Activated CD8-positive, alpha-beta memory T cell treated with anti-CD3 and anti-CD28 coated beads, Interleukin-2, amount 10 ng/mL, durations not matched to agents 7 days and 5 days (primary cell): ENCODE measurements at regions of chr1 and their contacts with region 1.

Region 1: DNA sequence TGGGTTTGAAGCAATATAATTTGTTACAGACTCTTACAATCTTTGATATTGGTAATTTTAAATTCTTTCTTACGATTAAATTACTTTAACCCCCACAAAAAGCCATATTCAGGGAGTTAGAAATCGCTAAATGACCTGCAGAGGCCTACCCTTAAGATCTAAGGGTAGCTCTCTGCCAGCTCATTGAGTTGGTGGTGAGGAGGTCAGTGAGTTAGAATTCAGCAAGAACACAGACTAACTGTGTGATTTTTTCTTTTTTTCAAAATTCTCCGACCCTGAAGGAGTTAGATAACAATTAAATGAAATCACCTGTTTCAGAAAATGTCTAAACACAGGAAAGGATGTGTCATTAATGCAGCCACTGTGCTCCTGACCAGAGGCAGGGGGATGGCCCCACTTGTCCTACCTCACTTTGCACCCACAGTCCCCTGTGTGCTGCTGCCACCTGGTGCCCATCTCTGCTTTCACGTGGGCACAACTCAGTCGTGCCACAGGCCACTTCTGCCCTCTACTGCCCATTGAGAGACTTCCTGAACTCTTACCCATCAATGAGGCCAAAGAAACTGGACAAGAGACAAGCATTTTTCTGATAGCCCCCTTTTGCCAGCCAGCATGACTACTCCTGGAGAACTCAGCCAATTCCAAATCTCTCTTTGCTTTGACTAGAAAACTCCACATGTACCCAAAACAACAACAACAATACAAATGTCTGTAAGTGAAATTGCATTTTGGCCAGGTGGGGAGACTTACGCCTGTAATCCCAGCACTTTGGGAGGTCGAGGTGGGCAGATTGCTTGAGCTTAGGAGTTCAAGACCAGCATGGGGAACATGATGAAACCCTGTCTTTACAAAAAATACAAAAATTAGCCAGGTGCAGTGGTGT is 8.4 kb downstream of the CFAP45 start:
- DNase-seq: peak; percentile 86
- ATAC-seq: peak; percentile 96
- H3K4me3 Mint-ChIP-seq: no peak overlapping the region
- H3K27ac Mint-ChIP-seq: no peak overlapping the region
- H3K4me1 Mint-ChIP-seq: peaks cover 18% of the 10 kb centered on the region
- H3K27me3 Mint-ChIP-seq: peaks cover 4% of the 10 kb centered on the region

Region 2: GRCh38 chr1:159687511-159687910 is 204.0 kb before region 1 on chr1:
- CTCF ChIA-PET with region 1: no interaction called
- DNase-seq: no peak
- ATAC-seq: no peak
- H3K4me3 Mint-ChIP-seq: no peak overlapping the region
- H3K27ac Mint-ChIP-seq: no peak overlapping the region
- H3K4me1 Mint-ChIP-seq: no peaks in the 10 kb centered on the region
- H3K27me3 Mint-ChIP-seq: peaks cover 40% of the 10 kb centered on the region

Region 3: DNA sequence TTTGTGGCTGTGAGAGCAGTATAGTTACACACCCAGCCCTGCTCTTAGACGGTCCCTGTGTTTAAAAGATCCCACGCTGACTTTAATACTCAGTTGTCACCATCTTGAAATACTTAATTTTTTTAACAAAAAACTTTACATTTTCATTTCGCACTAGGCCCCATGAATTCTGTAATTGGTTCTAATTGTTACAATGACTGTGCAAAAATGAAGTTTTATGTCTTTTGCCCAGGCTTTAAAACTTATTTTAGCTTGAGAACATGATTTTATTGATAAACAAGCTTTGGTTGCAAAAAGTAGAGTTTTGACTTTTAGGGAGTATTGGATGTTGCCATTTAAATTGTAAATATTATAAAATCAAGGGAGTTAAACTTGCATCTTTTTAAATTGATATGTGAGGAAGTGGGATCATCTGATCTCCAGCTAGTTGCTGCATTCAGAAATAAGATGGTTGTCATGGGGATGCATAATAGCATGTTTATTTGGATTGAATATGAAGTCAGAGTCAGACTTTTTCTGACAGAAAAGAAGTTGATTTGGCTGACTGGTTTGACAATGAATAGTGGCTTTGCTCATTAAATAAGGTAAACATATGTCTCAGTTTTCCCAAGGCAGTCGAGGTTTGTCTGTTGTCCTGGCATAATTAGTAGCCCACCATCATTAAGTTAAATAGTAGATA is 154.1 kb before region 1 on chr1:
- CTCF ChIA-PET with region 1: no interaction called
- DNase-seq: no peak
- ATAC-seq: no peak
- H3K4me3 Mint-ChIP-seq: no peak overlapping the region
- H3K27ac Mint-ChIP-seq: no peak overlapping the region
- H3K4me1 Mint-ChIP-seq: no peaks in the 10 kb centered on the region
- H3K27me3 Mint-ChIP-seq: peaks cover 18% of the 10 kb centered on the region

Region 4: GRCh38 chr1:159780583-159781582 is 110.6 kb before region 1 on chr1 and contains the start of gene DUSP23:
- CTCF ChIA-PET with region 1: interaction called, 68 read pairs
- DNase-seq: peak; percentile 98
- ATAC-seq: peak; percentile 99
- H3K4me3 Mint-ChIP-seq: peak within 1 kb of the TSS; percentile 72
- H3K27ac Mint-ChIP-seq: peak within 1 kb of the TSS; percentile 69
- H3K4me1 Mint-ChIP-seq: peaks cover 20% of the 10 kb centered on the region
- H3K27me3 Mint-ChIP-seq: peaks cover 3% of the 10 kb centered on the region
- total RNA-seq, gene DUSP23: 23.0 to 26.5 TPM

Region 5: DNA sequence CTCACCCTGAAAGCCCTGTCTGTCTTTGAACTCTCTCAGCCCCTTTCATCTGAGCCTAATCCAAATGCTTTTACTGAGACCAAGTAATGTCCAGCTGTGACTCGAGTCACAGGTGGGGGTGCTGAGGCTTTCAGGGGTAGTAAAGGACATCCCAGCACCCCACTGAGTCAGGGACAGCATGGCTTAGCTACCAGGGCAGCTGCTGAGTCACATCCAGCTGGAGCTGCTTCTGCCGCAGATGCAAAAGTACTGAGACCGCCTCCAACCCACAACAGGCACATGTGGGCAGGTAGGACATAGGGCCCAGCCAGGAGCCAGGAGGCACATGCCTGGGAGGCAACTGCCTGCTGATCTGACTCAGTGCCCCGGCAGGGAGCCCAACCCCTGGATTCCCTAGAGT is 22.3 kb before region 1 on chr1:
- CTCF ChIA-PET with region 1: interaction called, 29 read pairs
- DNase-seq: peak; percentile 68
- ATAC-seq: peak; percentile 74
- H3K4me3 Mint-ChIP-seq: no peak overlapping the region
- H3K27ac Mint-ChIP-seq: peak overlapping the region; percentile 3
- H3K4me1 Mint-ChIP-seq: peaks cover 22% of the 10 kb centered on the region
- H3K27me3 Mint-ChIP-seq: peaks cover 3% of the 10 kb centered on the region

Region 6: DNA sequence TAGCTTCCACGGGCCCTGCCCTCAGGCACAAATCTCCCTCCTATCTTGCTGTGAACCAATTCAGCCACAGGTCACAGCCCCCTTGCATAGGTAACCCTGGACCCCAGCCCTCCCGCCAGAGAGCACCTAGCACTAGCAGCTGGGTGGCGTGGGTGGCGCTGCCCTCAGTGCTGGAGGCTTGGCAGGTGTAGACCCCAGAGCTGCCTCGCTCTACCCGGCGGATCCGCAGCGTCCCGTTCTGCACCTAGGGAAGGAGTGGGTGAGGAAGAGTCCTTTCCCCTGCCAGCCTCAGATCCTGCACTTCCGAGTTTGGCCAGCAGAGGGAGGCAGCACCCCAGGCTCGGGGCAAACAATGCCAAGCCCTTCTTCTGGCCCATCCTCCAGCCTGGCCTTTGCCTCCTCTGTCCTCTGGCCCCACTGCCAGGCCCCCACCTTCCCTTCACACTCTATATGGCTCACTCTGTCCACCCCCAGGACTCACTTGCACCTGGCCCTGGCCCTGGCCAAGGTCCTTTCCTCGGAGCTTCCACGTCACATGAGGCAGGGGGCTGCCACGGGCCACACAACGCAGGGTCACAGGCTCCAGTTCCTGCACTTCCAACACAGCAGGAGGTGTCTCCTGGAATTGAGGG is 44.9 kb after region 1 on chr1:
- CTCF ChIA-PET with region 1: interaction called, 11 read pairs
- DNase-seq: peak; percentile 84
- ATAC-seq: peak; percentile 80
- H3K4me3 Mint-ChIP-seq: no peak overlapping the region
- H3K27ac Mint-ChIP-seq: no peak overlapping the region
- H3K4me1 Mint-ChIP-seq: peaks cover 15% of the 10 kb centered on the region
- H3K27me3 Mint-ChIP-seq: peaks cover 18% of the 10 kb centered on the region

Region 7: DNA sequence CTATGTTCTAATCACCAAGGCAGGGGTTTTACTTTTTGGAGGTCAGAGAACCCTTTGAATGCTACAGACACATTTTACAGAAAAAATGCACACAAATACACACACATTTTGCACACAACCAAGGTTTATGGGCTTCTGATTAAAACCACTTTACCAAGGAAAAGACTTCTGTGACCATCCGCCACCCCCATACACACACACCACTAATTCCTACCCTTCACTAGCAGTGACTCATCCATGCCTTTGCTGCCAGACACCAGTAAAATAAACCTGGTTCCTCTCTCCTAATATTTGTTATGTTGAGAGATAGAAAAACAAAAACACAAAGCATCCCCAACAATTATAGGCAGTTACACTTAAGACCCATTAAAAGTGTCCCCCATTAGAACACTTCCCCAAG is 127.4 kb after region 1 on chr1:
- CTCF ChIA-PET with region 1: interaction called, 11 read pairs
- DNase-seq: no peak
- ATAC-seq: peak; percentile 45
- H3K4me3 Mint-ChIP-seq: no peak overlapping the region
- H3K27ac Mint-ChIP-seq: peak overlapping the region; percentile 14
- H3K4me1 Mint-ChIP-seq: peaks cover 28% of the 10 kb centered on the region
- H3K27me3 Mint-ChIP-seq: no peaks in the 10 kb centered on the region

Region 8: DNA sequence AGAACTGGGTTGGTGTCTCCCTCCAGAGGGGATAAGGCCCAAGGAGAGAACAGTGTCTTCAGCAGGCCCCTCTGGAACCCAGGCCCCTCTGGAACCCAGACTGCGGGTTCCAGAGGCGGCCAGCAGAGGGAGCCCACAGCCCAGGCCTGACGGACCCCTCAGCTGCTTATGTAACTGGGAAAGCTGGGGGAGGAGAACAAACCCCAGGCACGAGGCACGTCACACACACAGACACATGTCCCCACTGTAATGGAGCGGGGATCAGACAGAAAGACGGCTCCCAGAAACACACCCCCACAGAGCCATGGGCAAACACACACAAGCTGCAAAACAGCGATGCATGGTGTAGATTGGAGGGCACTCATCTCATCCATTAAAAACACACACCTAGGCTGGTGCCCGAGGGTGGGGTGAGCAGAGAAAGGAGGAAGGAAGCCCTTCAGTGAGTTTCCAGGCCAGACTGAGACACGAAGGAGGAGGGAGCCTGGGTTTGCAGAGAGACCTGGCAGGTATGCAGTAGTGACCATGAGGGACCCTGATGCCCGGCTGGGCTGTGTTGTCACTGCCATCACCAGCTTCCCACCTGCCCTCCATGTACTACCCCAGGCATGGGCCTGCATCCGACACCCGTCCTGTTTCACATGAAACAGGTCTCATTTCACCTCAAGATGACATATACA is 209.7 kb after region 1 on chr1:
- CTCF ChIA-PET with region 1: no interaction called
- DNase-seq: peak; percentile 78
- ATAC-seq: peak; percentile 7
- H3K4me3 Mint-ChIP-seq: no peak overlapping the region
- H3K27ac Mint-ChIP-seq: no peak overlapping the region
- H3K4me1 Mint-ChIP-seq: peaks cover 35% of the 10 kb centered on the region
- H3K27me3 Mint-ChIP-seq: no peaks in the 10 kb centered on the region